ENCODE measurements at regions of chr19 and their contacts with region 1.

Region 1: DNA sequence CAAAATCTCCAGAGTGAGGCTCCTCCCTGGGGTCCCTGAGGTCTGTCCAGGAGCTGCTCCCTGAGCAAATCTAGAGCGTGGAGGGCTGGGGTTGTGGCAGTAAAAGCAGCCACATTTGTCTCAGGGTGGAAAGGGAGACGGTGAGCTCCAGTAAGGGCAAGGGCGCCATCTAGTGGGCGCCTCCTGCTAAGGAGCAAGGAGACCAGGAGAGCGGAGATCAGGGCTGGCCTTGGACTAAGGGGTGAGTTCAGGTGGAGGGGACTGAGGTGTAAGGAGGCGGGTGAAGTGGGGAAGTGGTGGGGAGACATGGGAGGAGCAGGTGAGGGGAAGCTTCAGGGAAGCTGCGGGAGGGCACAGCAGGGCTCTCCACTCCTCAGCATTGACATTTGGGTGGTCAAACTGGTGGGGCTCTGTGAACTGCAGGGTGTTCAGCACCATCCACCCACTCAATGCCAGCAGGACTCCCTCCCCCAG is 5.3 kb upstream of the CEACAM21 start:
- DNase-seq: peak; percentile 68 to 90 (median 83)
- ATAC-seq: peak; percentile 99
- H3K4me3 ChIP-seq: no peak overlapping the region
- H3K4me3 Mint-ChIP-seq: no peak overlapping the region
- H3K27ac ChIP-seq: no peak overlapping the region
- H3K27ac Mint-ChIP-seq: peak overlapping the region; percentile 28
- H3K4me1 ChIP-seq: peaks cover 37% of the 10 kb centered on the region
- H3K4me1 Mint-ChIP-seq: peaks cover 27% of the 10 kb centered on the region
- H3K27me3 ChIP-seq: no peaks in the 10 kb centered on the region
- H3K27me3 Mint-ChIP-seq: peaks cover 24% of the 10 kb centered on the region
- CTCF ChIP-seq: peak; percentile 81

Region 2: DNA sequence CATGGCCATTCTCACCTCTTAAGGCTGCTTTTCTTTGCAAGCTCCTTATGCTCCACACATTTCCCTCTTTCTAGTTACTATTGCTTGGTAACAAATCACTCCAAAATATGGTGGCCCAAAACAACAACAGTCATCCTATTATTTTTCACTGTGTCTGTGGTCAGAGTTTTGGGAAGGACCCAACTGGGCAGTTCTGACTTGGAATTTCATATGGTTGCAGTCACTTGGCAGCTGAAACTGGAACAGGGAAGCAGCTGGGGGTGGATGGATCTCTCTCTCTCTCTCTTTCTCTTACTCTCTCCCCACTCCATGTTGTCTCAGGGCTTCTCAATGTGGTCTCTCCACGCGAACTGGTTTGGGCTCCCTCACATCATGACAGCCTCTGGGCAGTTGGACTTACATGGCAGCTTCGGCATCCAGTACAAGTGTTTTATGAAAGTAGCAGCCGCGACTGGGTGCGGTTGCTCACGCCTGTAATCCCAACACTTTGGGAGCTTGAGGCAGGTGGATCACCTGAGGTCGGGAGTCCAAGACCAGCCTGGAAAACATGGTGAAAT is 919.8 kb before region 1 on chr19:
- CTCF ChIA-PET with region 1: no interaction called
- POLR2A ChIA-PET with region 1: no interaction called
- intact Hi-C with region 1: loop called in 1 of 2 experiments (anchors 10 kb)
- DNase-seq: no peak
- ATAC-seq: no peak
- H3K4me3 ChIP-seq: no peak overlapping the region
- H3K4me3 Mint-ChIP-seq: no peak overlapping the region
- H3K27ac ChIP-seq: no peak overlapping the region
- H3K27ac Mint-ChIP-seq: no peak overlapping the region
- H3K4me1 ChIP-seq: no peaks in the 10 kb centered on the region
- H3K4me1 Mint-ChIP-seq: no peaks in the 10 kb centered on the region
- H3K27me3 ChIP-seq: no peaks in the 10 kb centered on the region
- H3K27me3 Mint-ChIP-seq: peaks cover 2% of the 10 kb centered on the region
- CTCF ChIP-seq: no peak

Region 3: GRCh38 chr19:41457241-41457640 is 113.4 kb before region 1 on chr19:
- CTCF ChIA-PET with region 1: interaction called, 122 read pairs
- POLR2A ChIA-PET with region 1: no interaction called
- intact Hi-C with region 1: no loop called
- DNase-seq: peak in 2 of 9 experiments; percentile 34 to 47
- ATAC-seq: peak; percentile 44
- H3K4me3 ChIP-seq: no peak overlapping the region
- H3K4me3 Mint-ChIP-seq: no peak overlapping the region
- H3K27ac ChIP-seq: no peak overlapping the region
- H3K27ac Mint-ChIP-seq: no peak overlapping the region
- H3K4me1 ChIP-seq: peaks cover 16% of the 10 kb centered on the region
- H3K4me1 Mint-ChIP-seq: peaks cover 9% of the 10 kb centered on the region
- H3K27me3 ChIP-seq: no peaks in the 10 kb centered on the region
- H3K27me3 Mint-ChIP-seq: peaks cover 26% of the 10 kb centered on the region
- CTCF ChIP-seq: no peak

Region 4: DNA sequence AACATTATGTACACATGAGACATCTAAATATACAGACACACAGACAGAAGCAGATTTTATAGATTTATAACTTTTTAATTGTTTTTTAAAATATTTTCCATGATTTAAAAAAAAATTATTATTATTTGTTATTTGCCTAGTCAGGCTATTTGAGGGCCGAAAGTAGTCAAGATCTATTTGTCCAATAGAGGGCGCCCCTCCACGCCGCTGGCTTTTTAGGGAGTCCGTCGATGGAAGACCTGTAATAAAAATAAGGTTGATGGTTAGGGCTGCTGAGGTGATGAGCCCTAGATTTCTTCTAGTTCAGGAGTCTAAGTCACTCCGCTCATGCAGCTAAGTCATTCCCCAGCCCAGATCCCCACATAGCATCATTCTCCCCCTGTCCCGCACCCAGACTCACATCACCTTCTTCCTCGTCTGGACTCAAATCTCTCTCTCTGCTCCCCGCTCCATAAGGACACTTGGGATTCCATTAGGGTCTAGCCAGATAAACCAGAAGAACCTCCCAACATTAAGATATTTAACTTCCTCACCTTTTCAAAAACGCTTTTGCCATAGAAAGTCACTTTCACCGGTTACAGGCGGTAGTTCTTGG is 28.6 kb before region 1 on chr19:
- CTCF ChIA-PET with region 1: interaction called, 35 read pairs
- POLR2A ChIA-PET with region 1: no interaction called
- intact Hi-C with region 1: loop called (anchors 1 kb)
- DNase-seq: peak; percentile 55 to 89 (median 83)
- ATAC-seq: no peak
- H3K4me3 ChIP-seq: no peak overlapping the region
- H3K4me3 Mint-ChIP-seq: no peak overlapping the region
- H3K27ac ChIP-seq: no peak overlapping the region
- H3K27ac Mint-ChIP-seq: no peak overlapping the region
- H3K4me1 ChIP-seq: peaks cover 46% of the 10 kb centered on the region
- H3K4me1 Mint-ChIP-seq: peaks cover 43% of the 10 kb centered on the region
- H3K27me3 ChIP-seq: no peaks in the 10 kb centered on the region
- H3K27me3 Mint-ChIP-seq: peaks cover 4% of the 10 kb centered on the region
- CTCF ChIP-seq: peak; percentile 73

Region 5: DNA sequence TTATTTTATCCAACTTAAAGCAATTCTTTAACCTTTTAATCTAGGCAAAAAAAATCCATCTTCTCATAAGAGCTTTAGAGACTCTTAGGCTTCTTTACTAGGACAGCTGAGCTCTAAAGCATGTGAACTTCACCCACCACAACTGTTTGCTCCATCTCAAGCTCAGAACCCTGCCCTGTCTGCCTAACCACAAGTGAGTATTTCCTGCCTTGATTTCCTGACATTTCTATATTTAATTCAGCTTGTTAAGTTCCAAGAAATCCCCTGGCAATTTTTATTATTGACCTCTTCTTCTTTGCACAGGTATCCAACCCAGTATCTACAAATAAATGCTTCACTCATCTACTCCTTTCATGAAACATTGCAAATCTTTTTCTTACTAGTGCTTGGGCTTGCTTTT is 15.8 kb before region 1 on chr19:
- CTCF ChIA-PET with region 1: interaction called, 33 read pairs
- POLR2A ChIA-PET with region 1: interaction called, 15 read pairs
- intact Hi-C with region 1: no loop called
- DNase-seq: peak in 4 of 9 experiments; percentile 30 to 86 (median 54)
- ATAC-seq: peak; percentile 61
- H3K4me3 ChIP-seq: peak overlapping the region in 1 of 2 experiments; percentile 19
- H3K4me3 Mint-ChIP-seq: peak overlapping the region; percentile 67
- H3K27ac ChIP-seq: peak overlapping the region; percentile 6 to 72
- H3K27ac Mint-ChIP-seq: peak overlapping the region; percentile 86
- H3K4me1 ChIP-seq: peaks cover 57% of the 10 kb centered on the region
- H3K4me1 Mint-ChIP-seq: peaks cover 61% of the 10 kb centered on the region
- H3K27me3 ChIP-seq: no peaks in the 10 kb centered on the region
- H3K27me3 Mint-ChIP-seq: peaks cover 6% of the 10 kb centered on the region
- CTCF ChIP-seq: no peak

Region 6: GRCh38 chr19:41859618-41860418 is 289.1 kb after region 1 on chr19 and contains the start of gene RPS19:
- CTCF ChIA-PET with region 1: no interaction called
- POLR2A ChIA-PET with region 1: no interaction called
- intact Hi-C with region 1: no loop called
- DNase-seq: peak; percentile 96 to 99 (median 98)
- ATAC-seq: peak; percentile 87
- H3K4me3 ChIP-seq: peak within 1 kb of the TSS; percentile 74 to 92
- H3K4me3 Mint-ChIP-seq: peak within 1 kb of the TSS; percentile 94
- H3K27ac ChIP-seq: peak within 1 kb of the TSS; percentile 79 to 97
- H3K27ac Mint-ChIP-seq: peak within 1 kb of the TSS; percentile 96
- H3K4me1 ChIP-seq: peaks cover 46% of the 10 kb centered on the region
- H3K4me1 Mint-ChIP-seq: peaks cover 50% of the 10 kb centered on the region
- H3K27me3 ChIP-seq: no peaks in the 10 kb centered on the region
- H3K27me3 Mint-ChIP-seq: peaks cover 4% of the 10 kb centered on the region
- CTCF ChIP-seq: peak; percentile 82
- total RNA-seq, gene RPS19: 3,663 to 3,781 TPM

Measured in CD8-positive, alpha-beta T cell (primary cell).